ENCODE measurements at regions of chr10 and their contacts with region 1.

Region 1: DNA sequence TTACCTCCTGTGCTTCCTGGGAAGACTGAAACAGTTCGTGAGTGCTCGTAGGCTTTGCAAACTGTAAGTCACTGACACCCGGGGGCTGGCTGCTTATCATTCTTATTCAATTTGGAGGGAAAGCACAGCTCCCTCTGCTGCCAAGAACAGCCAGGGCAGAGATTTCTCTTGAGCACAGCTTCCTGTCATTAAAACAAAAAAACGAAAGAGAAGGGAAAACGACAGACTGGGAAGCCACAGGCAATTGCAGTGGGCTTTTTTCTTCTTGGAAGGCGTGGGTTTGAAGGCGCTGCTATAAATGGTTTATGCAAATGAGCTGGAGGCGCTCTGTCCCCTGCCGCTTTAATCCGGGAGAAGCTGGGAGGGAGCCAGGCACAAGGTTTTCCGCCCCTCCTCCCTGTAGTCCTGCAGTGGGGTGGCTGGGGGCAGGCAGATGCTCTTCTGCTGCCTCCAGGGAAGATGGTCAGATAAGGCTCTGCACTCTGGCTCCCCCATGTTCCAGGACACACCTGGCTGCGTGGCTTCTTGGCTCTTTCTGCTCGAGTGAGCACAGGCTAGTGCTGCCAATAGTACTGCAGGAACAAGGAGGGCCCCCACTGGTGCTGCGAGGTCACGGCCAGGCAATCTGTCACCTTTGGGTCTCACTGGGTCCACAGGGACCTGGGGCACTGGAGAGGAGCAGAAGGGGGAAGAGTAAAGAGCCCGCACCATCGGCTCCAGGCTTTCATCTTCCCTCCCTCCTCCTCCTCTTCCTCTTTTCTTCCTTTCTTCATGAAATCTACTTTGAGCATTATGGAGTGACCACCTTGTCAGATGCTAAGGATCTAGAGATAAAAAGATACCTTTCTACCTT is 49.5 kb downstream of the NEURL1 start:
- DNase-seq: peak; percentile 66
- H3K4me3 ChIP-seq: peak overlapping the region in 1 of 3 experiments; percentile 39
- H3K27ac ChIP-seq: no peak overlapping the region
- H3K4me1 ChIP-seq: peaks cover 4% of the 10 kb centered on the region
- H3K27me3 ChIP-seq: peaks cover 5 to 7% of the 10 kb centered on the region in 2 experiments
- CTCF ChIP-seq: peak; percentile 49 to 56
- POLR2A ChIP-seq: no peak

Region 2: GRCh38 chr10:103080891-103081581 is 462.0 kb before region 1 on chr10:
- CTCF ChIA-PET with region 1: no interaction called
- POLR2A ChIA-PET with region 1: no interaction called
- dilution Hi-C with region 1: no loop called
- intact Hi-C with region 1: no loop called
- DNase-seq: no peak
- H3K4me3 ChIP-seq: no peak overlapping the region
- H3K27ac ChIP-seq: no peak overlapping the region
- H3K4me1 ChIP-seq: no peaks in the 10 kb centered on the region
- H3K27me3 ChIP-seq: no peaks in the 10 kb centered on the region
- CTCF ChIP-seq: no peak
- POLR2A ChIP-seq: no peak

Region 3: DNA sequence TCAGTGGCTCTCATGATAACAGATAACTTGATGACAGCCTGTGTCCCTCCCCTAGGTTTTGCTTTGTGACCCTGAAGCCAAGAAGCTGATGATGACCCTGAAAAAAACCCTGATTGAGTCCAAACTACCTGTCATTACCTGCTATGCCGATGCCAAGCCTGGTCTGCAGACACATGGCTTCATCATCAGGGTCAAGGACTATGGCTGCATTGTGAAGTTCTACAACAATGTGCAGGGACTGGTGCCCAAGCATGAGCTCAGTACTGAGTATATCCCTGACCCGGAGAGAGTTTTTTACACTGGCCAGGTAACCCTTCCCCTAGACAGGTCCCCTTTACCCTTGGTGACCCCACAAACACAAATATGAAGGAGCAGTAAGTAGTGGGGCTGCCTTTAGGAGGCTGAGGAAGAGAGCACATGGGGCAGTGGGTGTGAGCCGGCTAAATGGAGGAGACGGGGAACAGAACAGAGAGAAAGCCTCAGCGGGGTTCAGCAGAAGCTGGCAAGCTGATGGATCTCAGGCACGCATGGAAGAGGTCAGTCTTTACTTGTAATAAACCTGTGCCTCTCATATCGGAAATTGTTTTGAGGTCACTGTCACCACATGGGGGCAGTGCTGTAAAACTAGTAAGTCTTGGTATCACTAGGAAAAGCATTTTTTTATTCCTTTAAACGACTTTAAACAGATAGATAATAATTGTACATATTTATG is 126.4 kb before region 1 on chr10:
- CTCF ChIA-PET with region 1: interaction called, 3 read pairs
- POLR2A ChIA-PET with region 1: no interaction called
- dilution Hi-C with region 1: no loop called
- intact Hi-C with region 1: loop called (anchors 2 kb)
- DNase-seq: peak; percentile 70
- H3K4me3 ChIP-seq: no peak overlapping the region
- H3K27ac ChIP-seq: no peak overlapping the region
- H3K4me1 ChIP-seq: no peaks in the 10 kb centered on the region
- H3K27me3 ChIP-seq: no peaks in the 10 kb centered on the region
- CTCF ChIP-seq: peak; percentile 36 to 40
- POLR2A ChIP-seq: no peak

Region 4: GRCh38 chr10:103481974-103482531 is 60.9 kb before region 1 on chr10:
- CTCF ChIA-PET with region 1: interaction called, 6 read pairs
- POLR2A ChIA-PET with region 1: no interaction called
- dilution Hi-C with region 1: no loop called
- intact Hi-C with region 1: loop called (anchors 1 kb)
- DNase-seq: peak; percentile 72
- H3K4me3 ChIP-seq: no peak overlapping the region
- H3K27ac ChIP-seq: no peak overlapping the region
- H3K4me1 ChIP-seq: no peaks in the 10 kb centered on the region
- H3K27me3 ChIP-seq: no peaks in the 10 kb centered on the region
- CTCF ChIP-seq: peak; percentile 49 to 69
- POLR2A ChIP-seq: no peak

Region 5: DNA sequence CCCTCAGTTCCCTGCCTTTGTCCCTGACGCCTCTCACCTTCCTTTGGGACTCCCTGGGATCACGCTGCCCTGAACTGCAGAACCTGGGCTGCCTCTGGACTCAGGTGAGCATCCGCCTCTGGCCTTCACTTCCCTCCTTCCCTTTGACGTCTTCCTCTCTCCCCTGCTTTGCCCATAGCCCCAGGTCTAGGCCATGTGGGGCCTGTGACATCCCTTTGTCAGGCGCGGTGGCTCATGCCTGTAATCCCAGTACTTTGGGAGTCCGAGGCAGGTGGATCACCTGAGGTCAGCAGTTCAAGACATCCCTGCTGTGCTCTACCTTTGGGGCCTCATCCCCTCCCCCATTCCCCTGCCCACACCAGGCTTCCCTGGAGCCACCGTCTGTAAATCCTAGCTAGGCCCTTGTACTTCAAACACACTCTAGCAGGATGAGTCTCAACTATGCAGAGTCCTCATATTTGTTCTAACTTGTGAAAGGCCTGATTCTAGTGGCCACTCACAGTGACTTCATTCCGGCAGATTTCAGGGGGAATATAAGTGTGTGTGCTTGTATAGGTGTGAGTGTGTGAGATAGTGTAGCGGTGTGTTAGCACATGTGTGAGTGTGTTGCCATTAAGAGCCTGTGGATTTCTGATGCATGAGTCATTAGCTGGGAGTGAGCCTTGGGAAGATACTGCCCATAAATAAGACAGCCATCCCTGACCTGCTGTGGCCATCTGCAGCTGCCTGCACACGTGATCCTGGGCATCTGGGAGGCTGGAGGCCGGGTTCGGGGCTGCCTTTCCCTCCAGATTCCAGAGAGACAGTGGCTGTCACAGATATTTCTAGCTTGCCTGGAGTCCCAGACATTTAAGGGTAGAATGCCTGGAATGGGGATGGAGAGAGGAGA is 51.3 kb before region 1 on chr10:
- CTCF ChIA-PET with region 1: interaction called, 11 read pairs
- POLR2A ChIA-PET with region 1: no interaction called
- dilution Hi-C with region 1: no loop called
- intact Hi-C with region 1: loop called (anchors 1 kb)
- DNase-seq: peak; percentile 38
- H3K4me3 ChIP-seq: no peak overlapping the region
- H3K27ac ChIP-seq: no peak overlapping the region
- H3K4me1 ChIP-seq: peaks cover 11% of the 10 kb centered on the region
- H3K27me3 ChIP-seq: peaks cover 17 to 33% of the 10 kb centered on the region in 2 experiments
- CTCF ChIP-seq: no peak
- POLR2A ChIP-seq: no peak

Region 6: DNA sequence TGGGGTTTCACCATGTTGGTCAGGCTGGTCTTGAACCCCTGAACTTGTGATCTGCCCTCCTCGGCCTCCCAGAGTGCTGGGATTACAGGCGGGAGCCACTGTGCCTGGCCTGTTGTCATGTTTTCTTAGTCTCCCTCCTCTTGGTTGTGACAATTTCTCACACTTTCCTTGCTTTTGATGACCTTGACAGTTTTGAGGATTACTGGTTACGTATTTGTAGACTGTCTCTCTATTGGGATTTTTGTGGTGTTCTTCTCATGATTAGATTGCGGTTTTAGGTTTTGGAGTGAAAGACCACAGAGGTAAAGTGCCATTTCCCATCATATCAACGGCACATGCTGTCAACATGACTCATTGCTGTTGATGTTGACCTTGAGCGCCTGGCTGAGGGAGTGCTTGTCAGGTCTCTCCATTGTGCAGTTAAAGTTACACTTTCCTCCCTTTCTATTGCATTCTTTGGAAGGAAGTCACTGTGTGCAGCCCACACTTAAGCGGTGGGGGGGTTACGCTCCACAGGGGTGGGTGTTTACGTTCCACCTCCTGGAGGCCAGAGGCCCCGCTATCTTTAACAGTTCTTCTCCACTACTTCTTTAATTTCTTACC is 38.7 kb before region 1 on chr10:
- CTCF ChIA-PET with region 1: interaction called, 11 read pairs
- POLR2A ChIA-PET with region 1: no interaction called
- dilution Hi-C with region 1: no loop called
- intact Hi-C with region 1: no loop called
- DNase-seq: peak; percentile 94
- H3K4me3 ChIP-seq: no peak overlapping the region
- H3K27ac ChIP-seq: peak overlapping the region; percentile 56
- H3K4me1 ChIP-seq: peaks cover 10% of the 10 kb centered on the region
- H3K27me3 ChIP-seq: peaks cover 2 to 17% of the 10 kb centered on the region in 2 experiments
- CTCF ChIP-seq: no peak
- POLR2A ChIP-seq: no peak

Region 7: DNA sequence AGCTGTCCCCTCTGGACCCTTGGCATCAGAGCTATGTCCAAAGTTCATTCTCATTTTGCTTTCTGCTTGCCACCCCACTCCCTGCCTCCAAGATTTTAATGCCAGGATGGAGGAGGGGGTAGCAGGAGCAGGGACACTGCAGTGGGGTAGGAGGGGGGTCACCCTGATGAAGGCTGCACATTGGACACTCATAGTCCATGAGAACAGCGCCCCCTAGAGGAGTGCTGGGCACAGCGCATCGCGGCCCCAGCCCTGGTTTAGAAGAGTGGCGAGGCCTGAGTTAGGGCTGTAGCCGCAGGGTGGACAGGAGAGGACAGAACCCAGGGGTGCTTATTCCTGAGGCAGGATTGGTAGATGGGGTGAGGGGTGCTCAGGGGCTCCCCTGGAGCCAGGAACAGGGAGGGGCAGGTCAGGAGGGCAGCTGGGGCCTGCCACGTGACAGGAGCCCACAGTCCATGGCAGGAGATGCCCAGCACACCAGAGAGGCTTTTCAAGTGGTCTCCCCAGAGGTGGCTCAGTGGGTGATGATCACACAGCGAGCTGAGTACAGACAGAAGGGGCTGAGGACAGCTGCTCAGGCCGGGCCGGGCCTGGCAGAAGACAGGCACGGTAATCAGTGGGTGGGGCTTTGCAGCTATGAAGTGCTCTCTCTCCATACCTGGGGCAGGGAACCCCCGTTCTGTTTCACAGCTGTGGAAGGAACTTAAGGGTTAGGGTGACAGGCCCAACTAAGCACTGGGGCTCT is 22.0 kb after region 1 on chr10:
- CTCF ChIA-PET with region 1: interaction called, 14 read pairs
- POLR2A ChIA-PET with region 1: no interaction called
- dilution Hi-C with region 1: no loop called
- intact Hi-C with region 1: no loop called
- DNase-seq: no peak
- H3K4me3 ChIP-seq: no peak overlapping the region
- H3K27ac ChIP-seq: no peak overlapping the region
- H3K4me1 ChIP-seq: no peaks in the 10 kb centered on the region
- H3K27me3 ChIP-seq: peaks cover 0 to 6% of the 10 kb centered on the region in 2 experiments
- CTCF ChIP-seq: peak; percentile 73 to 75
- POLR2A ChIP-seq: no peak

Region 8: GRCh38 chr10:103659674-103660363 is 116.8 kb after region 1 on chr10:
- CTCF ChIA-PET with region 1: no interaction called
- POLR2A ChIA-PET with region 1: no interaction called
- dilution Hi-C with region 1: no loop called
- intact Hi-C with region 1: no loop called
- DNase-seq: peak; percentile 52
- H3K4me3 ChIP-seq: peak overlapping the region in 2 of 3 experiments; percentile 10 to 28
- H3K27ac ChIP-seq: no peak overlapping the region
- H3K4me1 ChIP-seq: no peaks in the 10 kb centered on the region
- H3K27me3 ChIP-seq: no peaks in the 10 kb centered on the region
- CTCF ChIP-seq: peak in 1 of 2 donors; percentile 5
- POLR2A ChIP-seq: no peak